PC-9 (cell line): ENCODE measurements at regions of chr20 and their contacts with region 1.

Region 1: DNA sequence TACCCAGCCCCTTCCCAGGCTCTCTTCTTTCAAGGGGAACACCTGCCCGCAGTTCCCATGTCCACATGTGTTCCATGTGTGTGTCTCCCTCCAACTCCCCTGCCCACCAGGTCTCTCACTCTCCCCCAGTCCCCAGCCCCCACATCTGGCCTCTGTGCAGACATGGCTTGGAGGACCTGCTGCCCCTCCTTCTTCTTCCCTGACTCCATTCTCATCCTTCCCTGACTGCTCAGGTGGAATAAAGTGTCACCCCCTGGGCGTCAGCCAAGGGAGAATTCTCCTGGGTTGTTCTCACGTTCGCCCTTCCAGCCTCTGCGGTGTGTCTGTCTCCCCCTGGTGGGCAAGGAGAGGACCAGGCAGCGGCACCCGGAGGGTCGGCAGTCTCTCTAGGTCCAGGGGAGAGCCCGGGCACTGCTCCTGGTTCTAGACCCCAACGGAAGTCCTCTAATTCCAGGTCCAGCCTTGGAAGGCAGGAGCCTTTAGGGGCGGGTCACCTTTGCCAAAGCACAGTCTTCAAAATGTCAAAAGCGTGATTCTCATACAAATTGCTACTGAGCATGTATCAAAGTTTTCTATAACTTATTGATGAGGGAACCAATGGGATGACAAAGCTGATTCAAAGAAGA is 50.5 kb downstream of the EBF4 start:
- DNase-seq: peak in 1 of 2 experiments; percentile 63
- H3K4me3 ChIP-seq: no peak overlapping the region
- H3K27ac ChIP-seq: no peak overlapping the region
- H3K4me1 ChIP-seq: no peaks in the 10 kb centered on the region
- H3K27me3 ChIP-seq: peaks cover 51% of the 10 kb centered on the region
- CTCF ChIP-seq: peak; percentile 75

Region 2: GRCh38 chr20:2688041-2688591 is 54.9 kb before region 1 on chr20:
- CTCF ChIA-PET with region 1: no interaction called
- POLR2A ChIA-PET with region 1: no interaction called
- intact Hi-C with region 1: loop called (anchors 1 kb)
- DNase-seq: peak in 1 of 2 experiments; percentile 43
- H3K4me3 ChIP-seq: no peak overlapping the region
- H3K27ac ChIP-seq: no peak overlapping the region
- H3K4me1 ChIP-seq: no peaks in the 10 kb centered on the region
- H3K27me3 ChIP-seq: peaks cover 57% of the 10 kb centered on the region
- CTCF ChIP-seq: peak; percentile 56

Region 3: DNA sequence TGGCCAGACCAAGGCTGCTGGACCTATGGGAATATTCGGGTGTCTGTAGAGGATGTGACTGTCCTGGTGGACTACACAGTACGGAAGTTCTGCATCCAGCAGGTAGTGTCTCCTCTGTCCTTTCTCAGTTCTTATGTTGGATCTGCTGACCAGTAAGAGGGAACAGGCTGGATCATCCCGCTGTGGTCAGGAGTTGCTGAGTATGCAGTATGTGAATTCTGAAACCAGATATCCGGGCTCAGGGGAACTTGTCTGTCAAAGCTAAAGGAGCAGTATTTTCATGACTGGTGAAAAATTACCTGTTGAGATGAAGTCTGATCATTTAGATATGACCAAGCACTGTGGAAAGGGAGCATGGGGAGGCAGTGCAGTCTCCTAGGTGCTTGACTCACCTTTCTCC is 278.3 kb after region 1 on chr20:
- CTCF ChIA-PET with region 1: no interaction called
- POLR2A ChIA-PET with region 1: no interaction called
- intact Hi-C with region 1: no loop called
- DNase-seq: no peak
- H3K4me3 ChIP-seq: no peak overlapping the region
- H3K27ac ChIP-seq: no peak overlapping the region
- H3K4me1 ChIP-seq: no peaks in the 10 kb centered on the region
- H3K27me3 ChIP-seq: no peaks in the 10 kb centered on the region
- CTCF ChIP-seq: no peak